Caco-2 (cell line): ENCODE measurements at regions of chr11 and their contacts with region 1.

Region 1: GRCh38 chr11:34997952-34998528 is 81.6 kb downstream of the PDHX start:
- DNase-seq: no peak
- H3K4me3 ChIP-seq: no peak overlapping the region
- H3K4me3 Mint-ChIP-seq: no peak overlapping the region
- H3K27ac Mint-ChIP-seq: no peak overlapping the region
- H3K4me1 ChIP-seq: no peaks in the 10 kb centered on the region
- H3K4me1 Mint-ChIP-seq: no peaks in the 10 kb centered on the region
- H3K27me3 ChIP-seq: no peaks in the 10 kb centered on the region
- H3K27me3 Mint-ChIP-seq: no peaks in the 10 kb centered on the region
- CTCF ChIP-seq: peak; percentile 10 to 28

Region 2: DNA sequence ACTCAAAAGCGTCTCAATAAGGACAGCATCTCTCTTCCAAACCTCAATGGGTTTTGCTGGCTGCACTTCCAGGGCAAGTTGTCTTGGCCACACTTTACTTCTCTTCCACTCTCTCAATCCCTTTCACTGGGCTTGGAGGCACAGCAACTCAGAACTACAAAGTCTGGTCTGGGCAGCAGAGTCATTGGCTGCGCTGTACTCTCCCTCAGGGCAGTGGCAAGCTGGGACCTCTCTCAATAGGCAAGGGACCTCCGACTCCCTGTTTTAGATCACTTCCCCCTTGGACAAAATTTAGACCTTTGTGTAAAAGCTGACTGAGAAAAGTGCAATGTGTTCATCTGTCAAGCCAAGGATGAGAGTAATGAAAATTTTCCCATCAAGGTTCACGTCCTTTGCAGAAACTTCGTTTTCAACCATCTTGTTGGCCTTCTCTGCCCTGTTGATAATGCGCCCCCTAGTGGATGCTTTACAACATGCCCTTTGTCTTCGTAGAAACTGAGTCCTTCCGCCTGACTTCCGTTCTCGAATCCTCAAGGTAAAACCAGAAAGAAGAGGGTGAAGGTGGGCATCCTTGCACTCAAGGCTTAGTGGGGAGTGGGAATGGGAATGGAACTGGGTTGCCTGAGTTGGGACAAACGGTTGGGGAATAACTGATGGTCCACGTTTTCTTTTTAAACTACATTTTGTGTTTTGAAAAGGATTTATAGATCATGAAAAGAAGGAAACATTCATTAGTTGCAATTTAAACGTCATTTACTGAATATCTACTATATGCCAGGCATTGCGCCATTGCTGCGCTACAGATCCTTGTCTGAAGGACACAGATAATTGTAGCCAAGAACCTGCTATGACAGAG is 240.0 kb after region 1 on chr11:
- CTCF ChIA-PET with region 1: interaction called, 3 read pairs
- POLR2A ChIA-PET with region 1: no interaction called
- intact Hi-C with region 1: loop called (anchors 1 kb)
- DNase-seq: peak; percentile 51 to 71
- H3K4me3 ChIP-seq: no peak overlapping the region
- H3K4me3 Mint-ChIP-seq: no peak overlapping the region
- H3K27ac Mint-ChIP-seq: peak overlapping the region; percentile 11
- H3K4me1 ChIP-seq: peaks cover 4% of the 10 kb centered on the region; the same call in 1 of the 2 replicates
- H3K4me1 Mint-ChIP-seq: peaks cover 8% of the 10 kb centered on the region
- H3K27me3 ChIP-seq: no peaks in the 10 kb centered on the region
- H3K27me3 Mint-ChIP-seq: no peaks in the 10 kb centered on the region
- CTCF ChIP-seq: peak; percentile 72 to 85

Region 3: DNA sequence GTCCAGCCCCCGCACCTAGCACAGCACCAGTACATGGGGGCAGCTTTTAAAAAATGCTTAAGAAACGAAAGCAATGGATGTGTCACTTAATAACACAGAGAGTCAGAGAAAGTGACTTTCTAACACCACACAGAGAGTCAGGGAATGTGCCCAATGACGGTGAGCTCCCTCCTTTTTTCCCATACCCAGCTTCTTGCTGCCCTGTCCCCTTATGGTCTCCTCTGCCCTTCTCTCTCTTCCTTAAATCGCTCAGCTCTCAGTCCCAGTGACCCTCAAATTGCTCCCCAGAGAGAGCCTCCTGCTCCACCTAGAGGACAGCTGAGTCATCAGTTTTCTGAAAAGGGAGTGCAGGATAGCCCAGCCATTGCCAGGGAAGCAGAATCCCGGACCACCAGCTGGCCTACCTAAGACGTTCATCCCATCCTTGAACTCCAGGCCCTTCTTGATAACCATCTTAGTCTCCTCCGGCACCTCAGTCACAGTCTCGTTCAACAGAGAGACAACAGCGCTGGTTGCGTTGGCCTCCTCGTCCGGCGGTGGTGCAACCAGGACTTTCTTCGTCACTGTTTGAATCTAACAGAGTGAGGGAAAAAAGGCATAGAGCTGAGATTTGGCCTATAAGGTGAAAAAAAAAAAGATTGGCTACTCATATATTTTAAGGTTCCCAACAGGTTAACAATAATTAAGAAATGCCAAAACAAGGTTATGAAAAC is 307.8 kb after region 1 on chr11:
- CTCF ChIA-PET with region 1: no interaction called
- POLR2A ChIA-PET with region 1: no interaction called
- intact Hi-C with region 1: loop called (anchors 1 kb)
- DNase-seq: peak; percentile 53 to 62
- H3K4me3 ChIP-seq: no peak overlapping the region
- H3K4me3 Mint-ChIP-seq: no peak overlapping the region
- H3K27ac Mint-ChIP-seq: peak overlapping the region; percentile 56
- H3K4me1 ChIP-seq: no peaks in the 10 kb centered on the region
- H3K4me1 Mint-ChIP-seq: peaks cover 7% of the 10 kb centered on the region
- H3K27me3 ChIP-seq: no peaks in the 10 kb centered on the region
- H3K27me3 Mint-ChIP-seq: peaks cover 2% of the 10 kb centered on the region
- CTCF ChIP-seq: peak; percentile 68 to 85

Region 4: GRCh38 chr11:35412285-35412684 is 414.2 kb after region 1 on chr11:
- CTCF ChIA-PET with region 1: no interaction called
- POLR2A ChIA-PET with region 1: no interaction called
- intact Hi-C with region 1: loop called (anchors 5 kb)
- DNase-seq: peak in 1 of 2 experiments; percentile 30
- H3K4me3 ChIP-seq: no peak overlapping the region
- H3K4me3 Mint-ChIP-seq: no peak overlapping the region
- H3K27ac Mint-ChIP-seq: no peak overlapping the region
- H3K4me1 ChIP-seq: no peaks in the 10 kb centered on the region
- H3K4me1 Mint-ChIP-seq: no peaks in the 10 kb centered on the region
- H3K27me3 ChIP-seq: peaks cover 1% of the 10 kb centered on the region; the same call in 1 of the 2 replicates
- H3K27me3 Mint-ChIP-seq: peaks cover 12% of the 10 kb centered on the region
- CTCF ChIP-seq: peak; percentile 56 to 71